Breast epithelium (tissue), 4 donors: ENCODE measurements at regions of chr17 and their contacts with region 1.

Region 1: GRCh38 chr17:34626141-34626681 is 46.8 kb downstream of the TMEM132E start:
- DNase-seq: no peak
- H3K4me3 ChIP-seq: peak overlapping the region in 1 of 3 donors; percentile 22
- H3K27ac ChIP-seq: no peak overlapping the region
- H3K4me1 ChIP-seq: peaks cover 0 to 5% of the 10 kb centered on the region in 2 donors
- H3K27me3 ChIP-seq: peaks cover 5 to 51% of the 10 kb centered on the region in 2 donors
- CTCF ChIP-seq: no peak
- POLR2A ChIP-seq: no peak

Region 2: DNA sequence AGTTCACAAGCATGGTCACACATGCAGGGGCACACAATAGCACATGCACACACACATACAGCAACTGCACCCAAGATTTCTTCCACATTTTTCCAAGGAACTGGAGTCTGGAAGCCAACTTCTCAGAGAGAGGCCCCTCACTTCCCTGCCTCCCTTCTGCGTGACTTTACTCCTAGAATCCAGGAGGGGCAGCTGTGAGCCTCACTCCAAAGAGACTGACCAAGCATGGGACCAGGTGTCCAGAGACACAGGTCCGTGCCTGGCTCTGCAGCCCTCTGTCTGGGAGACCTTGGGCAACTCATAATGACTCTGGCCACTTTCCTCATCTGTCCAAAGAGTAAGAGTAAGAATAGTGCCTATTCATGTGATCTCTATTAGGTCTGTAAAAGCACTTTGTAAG is 151.5 kb before region 1 on chr17:
- intact Hi-C with region 1: loop called (anchors 5 kb)
- DNase-seq: no peak
- H3K4me3 ChIP-seq: no peak overlapping the region
- H3K27ac ChIP-seq: no peak overlapping the region
- H3K4me1 ChIP-seq: no peaks in the 10 kb centered on the region
- H3K27me3 ChIP-seq: peaks cover 0 to 31% of the 10 kb centered on the region in 2 donors
- CTCF ChIP-seq: no peak
- POLR2A ChIP-seq: no peak